Dorsolateral prefrontal cortex (tissue), 120 donors: ENCODE measurements at regions of chr14 and their contacts with region 1.

Region 1: GRCh38 chr14:68843471-68844209 is 50.8 kb upstream of the ZFP36L1 start:
- DNase-seq: peak; percentile 68 to 86 (median 74)
- H3K4me3 ChIP-seq: peak overlapping the region in 52 of 59 donors; percentile 13 to 63 (median 44)
- H3K27ac ChIP-seq: no peak overlapping the region
- H3K27me3 ChIP-seq: peaks cover 0 to 5% (median 0%) of the 10 kb centered on the region in 45 donors
- CTCF ChIP-seq: peak; percentile 58 to 94 (median 87)

Region 2: GRCh38 chr14:67934008-67934481 is 909.6 kb before region 1 on chr14:
- intact Hi-C with region 1: loop called in 1 of 2 experiments (anchors 2 kb)
- DNase-seq: peak in 1 of 10 donors; percentile 18
- H3K4me3 ChIP-seq: no peak overlapping the region
- H3K27ac ChIP-seq: peak overlapping the region in 20 of 59 donors; percentile 1 to 64 (median 22)
- H3K27me3 ChIP-seq: no peaks in the 10 kb centered on the region
- CTCF ChIP-seq: peak; percentile 33 to 87 (median 70)